Cardiac septum (tissue), 1 donor: ENCODE measurements at regions of chr10 and their contacts with region 1.

Region 1: GRCh38 chr10:69092959-69093850 is 5.3 kb downstream of the SRGN start:
- DNase-seq: peak; percentile 79

Region 2: DNA sequence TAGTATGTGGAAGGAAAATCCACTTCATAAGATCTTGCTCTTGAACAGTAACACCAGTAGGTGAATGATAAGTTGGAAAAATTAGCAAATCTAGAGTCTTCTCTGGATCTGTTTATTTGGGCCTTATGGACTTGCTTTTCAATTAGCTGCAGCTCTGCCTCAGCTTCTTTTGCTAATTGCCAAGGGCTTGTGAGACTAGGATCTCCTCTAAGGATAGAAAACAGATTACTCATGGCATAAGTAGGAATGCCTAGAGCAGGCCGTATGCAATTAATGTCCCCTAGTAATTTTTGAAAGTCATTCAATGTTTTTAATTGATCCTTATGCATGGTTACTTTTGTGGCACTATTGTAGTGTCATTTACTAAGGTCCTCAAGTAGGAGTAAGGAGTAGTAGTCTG is 228.6 kb before region 1 on chr10:
- intact Hi-C with region 1: no loop called
- DNase-seq: no peak

Region 3: GRCh38 chr10:68876246-68877138 is 216.7 kb before region 1 on chr10:
- intact Hi-C with region 1: no loop called
- DNase-seq: no peak

Region 4: GRCh38 chr10:68955832-68956532 is 137.2 kb before region 1 on chr10 and contains the start of gene DDX21:
- intact Hi-C with region 1: loop called (anchors 1 kb)
- DNase-seq: peak; percentile 96
- total RNA-seq, gene DDX21: 31.0 TPM

Region 5: GRCh38 chr10:69004821-69005220 is 88.4 kb before region 1 on chr10:
- intact Hi-C with region 1: loop called (anchors 1 kb)
- DNase-seq: no peak

Region 6: DNA sequence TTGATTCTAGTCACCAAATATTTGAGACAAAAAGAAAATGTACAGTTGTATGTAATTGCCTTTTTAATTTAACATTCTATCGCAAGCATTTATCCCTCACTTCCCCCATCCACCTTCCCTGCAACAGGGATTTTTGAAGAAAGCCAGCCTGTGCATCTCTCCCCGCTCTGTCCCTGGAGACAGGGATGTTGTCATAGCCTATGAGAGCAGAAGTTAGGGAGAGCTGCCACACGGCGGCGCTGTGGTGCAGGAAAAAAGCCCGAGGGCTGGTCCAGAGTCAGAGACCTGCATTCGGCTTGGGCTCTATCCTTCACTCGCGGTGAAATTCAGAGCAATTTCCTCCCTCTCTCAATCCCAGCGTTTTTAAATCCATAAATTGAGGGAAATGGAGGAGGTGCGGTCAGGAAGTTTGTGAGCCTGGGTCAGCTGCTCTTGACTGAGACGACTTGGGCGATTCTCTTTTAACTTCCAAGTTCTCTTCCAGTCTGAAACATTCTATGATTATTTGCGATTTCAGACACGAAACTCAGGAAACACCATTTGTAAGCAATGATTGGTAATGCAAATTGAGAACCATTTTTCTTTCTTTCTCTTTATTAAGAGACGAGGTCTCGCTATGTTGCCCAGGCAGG is 144.4 kb after region 1 on chr10:
- intact Hi-C with region 1: no loop called
- DNase-seq: peak; percentile 94